CD8-positive, alpha-beta T cell (primary cell): ENCODE measurements at regions of chr17 and their contacts with region 1.

Region 1: GRCh38 chr17:6666077-6666521 is 14.5 kb downstream of the C17orf100 start:
- DNase-seq: peak in 6 of 9 experiments; percentile 16 to 69 (median 50)
- ATAC-seq: peak; percentile 65
- H3K4me3 ChIP-seq: no peak overlapping the region
- H3K4me3 Mint-ChIP-seq: no peak overlapping the region
- H3K27ac ChIP-seq: no peak overlapping the region
- H3K27ac Mint-ChIP-seq: no peak overlapping the region
- H3K4me1 ChIP-seq: no peaks in the 10 kb centered on the region
- H3K4me1 Mint-ChIP-seq: peaks cover 15% of the 10 kb centered on the region
- H3K27me3 ChIP-seq: peaks cover 0 to 2% of the 10 kb centered on the region in 2 experiments
- H3K27me3 Mint-ChIP-seq: no peaks in the 10 kb centered on the region
- CTCF ChIP-seq: peak; percentile 77

Region 2: DNA sequence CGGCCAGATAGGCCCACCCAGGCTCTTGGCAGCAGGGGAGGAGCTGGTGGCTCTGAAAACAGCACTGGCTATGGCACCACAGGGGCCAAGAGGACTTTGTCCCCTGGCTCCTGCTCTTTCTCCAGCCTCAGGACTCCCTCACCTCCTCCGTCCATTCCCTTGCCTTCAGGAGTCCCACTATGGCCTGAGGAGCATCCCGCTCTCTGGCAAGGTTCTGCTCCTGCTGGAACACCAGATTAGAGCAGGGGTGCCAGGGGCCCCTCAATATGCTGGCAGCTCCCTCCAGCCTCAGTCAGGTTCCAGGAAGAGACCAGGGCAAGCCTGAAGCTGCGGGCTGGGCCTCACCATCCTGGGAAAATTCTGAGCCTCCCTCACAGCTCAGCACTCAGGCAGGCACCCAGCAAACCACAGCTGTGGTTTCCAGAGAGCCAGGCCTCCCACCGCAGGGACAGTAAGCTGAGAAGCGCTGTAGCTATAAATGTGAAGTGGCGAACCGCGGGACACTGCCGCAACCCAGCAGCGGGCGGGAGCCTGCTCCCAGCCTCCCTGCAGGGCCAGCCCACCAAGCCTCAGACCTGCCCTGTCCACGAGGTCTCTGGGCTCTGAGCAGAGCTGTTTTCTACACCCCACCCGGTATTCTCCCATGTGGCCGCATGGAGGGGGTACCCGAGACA is 11.2 kb after region 1 on chr17:
- CTCF ChIA-PET with region 1: interaction called, 10 read pairs
- POLR2A ChIA-PET with region 1: no interaction called
- intact Hi-C with region 1: no loop called
- DNase-seq: peak in 2 of 9 experiments; percentile 24 to 27
- ATAC-seq: peak; percentile 11
- H3K4me3 ChIP-seq: no peak overlapping the region
- H3K4me3 Mint-ChIP-seq: no peak overlapping the region
- H3K27ac ChIP-seq: no peak overlapping the region
- H3K27ac Mint-ChIP-seq: no peak overlapping the region
- H3K4me1 ChIP-seq: peaks cover 13% of the 10 kb centered on the region
- H3K4me1 Mint-ChIP-seq: peaks cover 5% of the 10 kb centered on the region
- H3K27me3 ChIP-seq: no peaks in the 10 kb centered on the region
- H3K27me3 Mint-ChIP-seq: peaks cover 29% of the 10 kb centered on the region
- CTCF ChIP-seq: no peak

Region 3: GRCh38 chr17:6831661-6832263 is 165.7 kb after region 1 on chr17 and contains the start of gene TEKT1:
- CTCF ChIA-PET with region 1: no interaction called
- POLR2A ChIA-PET with region 1: no interaction called
- intact Hi-C with region 1: loop called in 1 of 2 experiments (anchors 5 kb)
- DNase-seq: peak; percentile 50 to 88 (median 74)
- ATAC-seq: peak; percentile 92
- H3K4me3 ChIP-seq: peak within 1 kb of the TSS; percentile 30 to 49
- H3K4me3 Mint-ChIP-seq: peak within 1 kb of the TSS; percentile 82
- H3K27ac ChIP-seq: peak within 1 kb of the TSS in 1 of 2 experiments; percentile 31
- H3K27ac Mint-ChIP-seq: no peak within 1 kb of the TSS
- H3K4me1 ChIP-seq: peaks cover 12% of the 10 kb centered on the region
- H3K4me1 Mint-ChIP-seq: peaks cover 9% of the 10 kb centered on the region
- H3K27me3 ChIP-seq: peaks cover 23 to 31% of the 10 kb centered on the region in 2 experiments
- H3K27me3 Mint-ChIP-seq: peaks cover 52% of the 10 kb centered on the region
- CTCF ChIP-seq: no peak
- total RNA-seq, gene TEKT1: not detected

Region 4: GRCh38 chr17:7004398-7005253 is 338.5 kb after region 1 on chr17:
- CTCF ChIA-PET with region 1: interaction called, 4 read pairs
- POLR2A ChIA-PET with region 1: no interaction called
- intact Hi-C with region 1: loop called (anchors 5 kb)
- DNase-seq: peak in 3 of 9 experiments; percentile 47 to 85 (median 77)
- ATAC-seq: peak; percentile 98
- H3K4me3 ChIP-seq: no peak overlapping the region
- H3K4me3 Mint-ChIP-seq: no peak overlapping the region
- H3K27ac ChIP-seq: no peak overlapping the region
- H3K27ac Mint-ChIP-seq: no peak overlapping the region
- H3K4me1 ChIP-seq: no peaks in the 10 kb centered on the region
- H3K4me1 Mint-ChIP-seq: peaks cover 23% of the 10 kb centered on the region
- H3K27me3 ChIP-seq: no peaks in the 10 kb centered on the region
- H3K27me3 Mint-ChIP-seq: no peaks in the 10 kb centered on the region
- CTCF ChIP-seq: peak; percentile 78